ENCODE measurements at regions of chr3 and their contacts with region 1.

Region 1: GRCh38 chr3:197083486-197083885 is 53.9 kb upstream of the MELTF start:
- DNase-seq: peak; percentile 23 to 51
- ATAC-seq: peak; percentile 97 to 100
- H3K4me3 ChIP-seq: no peak overlapping the region
- H3K27ac ChIP-seq: peak overlapping the region in 3 of 4 donors; percentile 40 to 54 (median 47)
- H3K4me1 ChIP-seq: peaks cover 4 to 24% of the 10 kb centered on the region in 2 donors
- H3K27me3 ChIP-seq: no peaks in the 10 kb centered on the region
- CTCF ChIP-seq: no peak
- POLR2A ChIP-seq: no peak

Region 2: GRCh38 chr3:196163687-196164493 is 919.6 kb before region 1 on chr3:
- in situ Hi-C with region 1: no loop called
- intact Hi-C with region 1: no loop called
- DNase-seq: peak in 1 of 2 donors; percentile 69
- ATAC-seq: peak; percentile 52 to 78
- H3K4me3 ChIP-seq: peak overlapping the region; percentile 12 to 47 (median 32)
- H3K27ac ChIP-seq: peak overlapping the region; percentile 66 to 81 (median 76)
- H3K4me1 ChIP-seq: peaks cover 16 to 23% of the 10 kb centered on the region in 2 donors
- H3K27me3 ChIP-seq: no peaks in the 10 kb centered on the region
- CTCF ChIP-seq: no peak
- POLR2A ChIP-seq: no peak

Region 3: GRCh38 chr3:196735751-196736150 is 347.7 kb before region 1 on chr3:
- in situ Hi-C with region 1: no loop called
- intact Hi-C with region 1: no loop called
- DNase-seq: no peak
- ATAC-seq: no peak
- H3K4me3 ChIP-seq: no peak overlapping the region
- H3K27ac ChIP-seq: no peak overlapping the region
- H3K4me1 ChIP-seq: peaks cover 0 to 5% of the 10 kb centered on the region in 2 donors
- H3K27me3 ChIP-seq: no peaks in the 10 kb centered on the region
- CTCF ChIP-seq: no peak
- POLR2A ChIP-seq: no peak

Region 4: GRCh38 chr3:197186887-197187588 is 103.6 kb after region 1 on chr3:
- in situ Hi-C with region 1: no loop called
- intact Hi-C with region 1: loop called (anchors 5 kb)
- DNase-seq: no peak
- ATAC-seq: peak; percentile 53 to 59
- H3K4me3 ChIP-seq: no peak overlapping the region
- H3K27ac ChIP-seq: no peak overlapping the region
- H3K4me1 ChIP-seq: peaks cover 18 to 23% of the 10 kb centered on the region in 2 donors
- H3K27me3 ChIP-seq: no peaks in the 10 kb centered on the region
- CTCF ChIP-seq: peak; percentile 48 to 80 (median 75)
- POLR2A ChIP-seq: no peak

Region 5: GRCh38 chr3:197841789-197842188 is 758.3 kb after region 1 on chr3:
- in situ Hi-C with region 1: no loop called
- intact Hi-C with region 1: no loop called
- DNase-seq: no peak
- ATAC-seq: peak; percentile 19 to 33
- H3K4me3 ChIP-seq: no peak overlapping the region
- H3K27ac ChIP-seq: no peak overlapping the region
- H3K4me1 ChIP-seq: no peaks in the 10 kb centered on the region
- H3K27me3 ChIP-seq: no peaks in the 10 kb centered on the region
- CTCF ChIP-seq: no peak
- POLR2A ChIP-seq: no peak